ENCODE measurements at regions of chr5 and their contacts with region 1.

Region 1: GRCh38 chr5:86968301-86968753 is 299.4 kb upstream of the RASA1 start:
- DNase-seq: peak; percentile 56
- H3K4me3 Mint-ChIP-seq: no peak overlapping the region
- H3K27ac Mint-ChIP-seq: peak overlapping the region; percentile 43
- H3K4me1 Mint-ChIP-seq: peaks cover 37% of the 10 kb centered on the region
- H3K27me3 Mint-ChIP-seq: no peaks in the 10 kb centered on the region
- CTCF ChIP-seq: no peak

Region 2: DNA sequence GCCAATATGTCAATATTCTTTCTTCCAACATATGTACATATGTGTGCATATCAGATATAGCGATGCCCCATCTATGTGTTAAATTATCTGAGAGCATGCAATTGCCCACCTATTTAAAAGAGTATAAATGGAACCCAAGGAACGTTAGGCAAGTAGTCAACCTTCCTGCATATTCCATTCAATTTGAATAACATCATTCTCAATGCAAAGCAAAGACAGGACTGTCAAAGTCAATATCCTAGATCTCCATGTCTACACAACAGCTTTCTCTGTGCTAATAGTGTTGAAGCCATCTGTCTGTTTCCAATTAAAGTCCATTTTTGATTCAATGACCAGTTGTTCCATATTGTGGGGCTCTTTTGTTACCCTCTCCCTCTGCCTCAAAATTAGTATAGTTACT is 435.9 kb before region 1 on chr5:
- CTCF ChIA-PET with region 1: no interaction called
- intact Hi-C with region 1: no loop called
- DNase-seq: no peak
- H3K4me3 Mint-ChIP-seq: no peak overlapping the region
- H3K27ac Mint-ChIP-seq: no peak overlapping the region
- H3K4me1 Mint-ChIP-seq: peaks cover 13% of the 10 kb centered on the region
- H3K27me3 Mint-ChIP-seq: no peaks in the 10 kb centered on the region
- CTCF ChIP-seq: no peak

Region 3: DNA sequence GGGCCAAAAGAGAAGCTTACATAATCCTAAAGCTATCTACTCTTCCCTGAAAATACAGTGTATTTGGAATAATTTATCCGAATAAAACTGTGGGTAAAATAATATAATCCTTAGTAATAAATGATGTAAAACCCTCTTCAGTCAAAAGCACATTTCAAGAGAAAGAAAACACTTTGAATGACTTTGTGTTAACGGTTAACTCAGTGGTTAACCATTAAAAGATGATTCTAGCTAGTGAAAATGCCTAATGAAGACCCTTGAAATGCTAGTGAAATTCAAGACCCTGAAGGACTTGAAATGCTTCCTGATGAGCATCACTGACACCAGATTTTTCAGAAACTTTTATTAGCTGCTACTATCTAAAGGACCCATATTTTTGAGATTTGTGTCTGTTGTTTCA is 279.9 kb before region 1 on chr5:
- CTCF ChIA-PET with region 1: no interaction called
- intact Hi-C with region 1: loop called (anchors 5 kb)
- DNase-seq: no peak
- H3K4me3 Mint-ChIP-seq: no peak overlapping the region
- H3K27ac Mint-ChIP-seq: no peak overlapping the region
- H3K4me1 Mint-ChIP-seq: no peaks in the 10 kb centered on the region
- H3K27me3 Mint-ChIP-seq: no peaks in the 10 kb centered on the region
- CTCF ChIP-seq: no peak

Region 4: DNA sequence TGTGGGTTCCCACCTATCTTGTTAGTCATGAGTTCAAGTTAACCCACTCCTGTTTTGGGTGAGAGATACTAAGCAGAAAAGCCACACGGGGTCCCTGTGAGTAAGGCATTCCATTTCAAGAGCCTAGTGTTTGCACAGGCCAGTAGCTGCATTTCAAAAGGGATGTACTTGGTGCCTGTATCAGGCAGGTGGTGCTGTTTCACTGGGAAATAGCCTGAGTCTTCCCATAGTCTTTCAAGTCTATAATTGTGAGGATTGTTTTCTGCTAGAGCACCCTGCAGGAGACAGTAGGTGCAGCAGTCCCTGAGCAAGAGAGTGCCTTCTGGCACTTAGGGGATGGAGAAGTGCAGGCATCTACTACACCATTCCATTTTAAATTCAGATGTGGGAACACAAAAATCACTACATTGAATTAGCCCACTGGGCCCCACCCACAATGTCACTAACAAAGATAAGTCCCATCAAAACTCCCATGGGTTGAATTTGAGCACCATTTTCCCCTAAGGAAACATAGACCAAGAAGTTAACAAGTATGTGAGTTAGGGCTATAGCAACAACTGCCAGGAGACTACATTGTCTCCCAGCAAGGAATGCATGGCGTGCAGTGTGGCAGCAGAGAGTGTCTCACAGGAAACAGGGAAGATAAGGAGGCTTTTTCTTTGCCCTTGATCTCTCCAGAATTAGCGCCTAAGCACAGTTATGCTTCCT is 87.4 kb before region 1 on chr5:
- CTCF ChIA-PET with region 1: interaction called, 67 read pairs
- intact Hi-C with region 1: loop called (anchors 1 kb)
- DNase-seq: peak; percentile 80
- H3K4me3 Mint-ChIP-seq: no peak overlapping the region
- H3K27ac Mint-ChIP-seq: no peak overlapping the region
- H3K4me1 Mint-ChIP-seq: peaks cover 9% of the 10 kb centered on the region
- H3K27me3 Mint-ChIP-seq: no peaks in the 10 kb centered on the region
- CTCF ChIP-seq: peak; percentile 91

Region 5: DNA sequence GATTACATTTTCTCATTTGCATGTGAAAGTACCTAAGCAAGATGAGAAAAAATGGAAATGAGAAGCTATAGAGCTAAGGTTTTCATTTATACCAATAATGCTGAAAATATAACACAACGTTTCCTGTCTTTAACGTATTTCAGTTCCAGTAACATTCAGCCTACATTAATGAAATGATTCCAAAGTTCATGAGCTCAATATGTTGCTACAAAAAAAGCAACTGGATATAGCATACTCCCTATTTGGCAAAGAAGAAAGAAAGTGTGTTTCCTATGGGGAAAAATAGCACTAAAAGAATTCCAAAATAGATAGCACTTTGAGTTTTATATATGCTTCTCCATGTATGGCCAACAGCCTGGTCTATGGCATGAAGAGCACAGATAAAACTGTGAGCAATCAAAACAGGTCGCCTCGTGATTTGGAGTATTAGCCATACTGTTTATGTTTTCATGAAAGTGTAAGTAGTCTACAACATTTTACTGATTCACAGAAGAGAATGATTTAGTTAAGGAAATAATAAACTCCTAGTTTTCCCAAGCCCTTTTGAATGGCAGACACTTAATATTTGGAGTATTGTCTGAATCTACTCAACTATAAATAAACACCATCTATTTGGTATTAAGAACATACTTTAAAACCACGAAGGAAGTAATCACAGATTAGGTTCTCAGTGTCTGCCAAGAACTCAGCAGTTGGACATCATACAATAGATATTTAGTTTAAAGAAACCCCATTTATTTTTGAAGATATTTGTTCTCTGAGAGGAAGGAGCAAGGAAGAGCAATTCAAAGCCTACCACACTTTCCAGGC is 40.6 kb after region 1 on chr5:
- CTCF ChIA-PET with region 1: interaction called, 5 read pairs
- intact Hi-C with region 1: loop called (anchors 1 kb)
- DNase-seq: no peak
- H3K4me3 Mint-ChIP-seq: no peak overlapping the region
- H3K27ac Mint-ChIP-seq: no peak overlapping the region
- H3K4me1 Mint-ChIP-seq: peaks cover 14% of the 10 kb centered on the region
- H3K27me3 Mint-ChIP-seq: no peaks in the 10 kb centered on the region
- CTCF ChIP-seq: no peak

Region 6: GRCh38 chr5:87762631-87763030 is 794.3 kb after region 1 on chr5:
- CTCF ChIA-PET with region 1: no interaction called
- intact Hi-C with region 1: loop called (anchors 5 kb)
- DNase-seq: no peak
- H3K4me3 Mint-ChIP-seq: no peak overlapping the region
- H3K27ac Mint-ChIP-seq: no peak overlapping the region
- H3K4me1 Mint-ChIP-seq: peaks cover 11% of the 10 kb centered on the region
- H3K27me3 Mint-ChIP-seq: no peaks in the 10 kb centered on the region
- CTCF ChIP-seq: no peak

Region 7: GRCh38 chr5:88680253-88681132 is 1712.2 kb after region 1 on chr5:
- CTCF ChIA-PET with region 1: interaction called, 10 read pairs
- intact Hi-C with region 1: no loop called
- DNase-seq: peak; percentile 96
- H3K4me3 Mint-ChIP-seq: peak overlapping the region; percentile 65
- H3K27ac Mint-ChIP-seq: no peak overlapping the region
- H3K4me1 Mint-ChIP-seq: peaks cover 22% of the 10 kb centered on the region
- H3K27me3 Mint-ChIP-seq: peaks cover 12% of the 10 kb centered on the region
- CTCF ChIP-seq: peak; percentile 99

Measured in Calu3 (cell line).